ENCODE measurements at regions of chr1 and their contacts with region 1.

Region 1: DNA sequence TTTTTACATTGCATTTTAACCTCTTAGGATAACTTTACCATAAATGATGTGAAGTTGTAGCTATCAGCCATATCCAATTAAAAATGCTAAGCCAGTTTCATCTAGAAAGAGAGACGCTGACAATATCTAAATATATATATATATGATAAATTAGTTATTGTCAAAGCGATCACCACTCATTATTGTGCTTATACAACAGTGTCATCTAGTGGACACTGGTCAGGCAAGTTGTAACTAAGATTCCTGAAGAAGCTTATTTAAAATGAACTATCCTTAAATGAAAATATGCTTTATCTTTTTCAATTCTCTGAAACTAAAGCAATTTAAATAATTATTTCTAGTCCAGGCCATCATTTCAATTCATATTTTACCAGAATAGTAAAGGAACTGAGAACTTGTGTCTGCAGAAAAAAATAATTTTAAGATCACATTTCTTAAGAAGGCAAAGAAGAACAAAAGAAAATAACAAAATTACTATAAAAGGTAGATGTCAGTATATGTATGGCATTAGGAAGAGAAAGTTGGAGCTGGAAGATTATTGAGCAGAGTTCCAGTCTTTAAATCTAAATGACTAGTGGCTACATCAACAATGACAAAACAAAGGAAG is 193.3 kb upstream of the SNX7 start:
- DNase-seq: peak; percentile 89
- ATAC-seq: peak; percentile 81
- H3K4me3 ChIP-seq: no peak overlapping the region
- H3K27ac ChIP-seq: peak overlapping the region; percentile 7; the same call in 1 of the 2 replicates
- H3K4me1 ChIP-seq: peaks cover 16% of the 10 kb centered on the region
- H3K27me3 ChIP-seq: no peaks in the 10 kb centered on the region
- CTCF ChIP-seq: peak; percentile 75

Region 2: GRCh38 chr1:97668945-97669344 is 799.3 kb before region 1 on chr1:
- CTCF ChIA-PET with region 1: no interaction called
- POLR2A ChIA-PET with region 1: no interaction called
- intact Hi-C with region 1: loop called (anchors 1 kb)
- DNase-seq: peak; percentile 64
- ATAC-seq: peak; percentile 91
- H3K4me3 ChIP-seq: no peak overlapping the region
- H3K27ac ChIP-seq: no peak overlapping the region
- H3K4me1 ChIP-seq: peaks cover 7% of the 10 kb centered on the region; the same call in 1 of the 2 replicates
- H3K27me3 ChIP-seq: no peaks in the 10 kb centered on the region
- CTCF ChIP-seq: peak; percentile 76

Region 3: DNA sequence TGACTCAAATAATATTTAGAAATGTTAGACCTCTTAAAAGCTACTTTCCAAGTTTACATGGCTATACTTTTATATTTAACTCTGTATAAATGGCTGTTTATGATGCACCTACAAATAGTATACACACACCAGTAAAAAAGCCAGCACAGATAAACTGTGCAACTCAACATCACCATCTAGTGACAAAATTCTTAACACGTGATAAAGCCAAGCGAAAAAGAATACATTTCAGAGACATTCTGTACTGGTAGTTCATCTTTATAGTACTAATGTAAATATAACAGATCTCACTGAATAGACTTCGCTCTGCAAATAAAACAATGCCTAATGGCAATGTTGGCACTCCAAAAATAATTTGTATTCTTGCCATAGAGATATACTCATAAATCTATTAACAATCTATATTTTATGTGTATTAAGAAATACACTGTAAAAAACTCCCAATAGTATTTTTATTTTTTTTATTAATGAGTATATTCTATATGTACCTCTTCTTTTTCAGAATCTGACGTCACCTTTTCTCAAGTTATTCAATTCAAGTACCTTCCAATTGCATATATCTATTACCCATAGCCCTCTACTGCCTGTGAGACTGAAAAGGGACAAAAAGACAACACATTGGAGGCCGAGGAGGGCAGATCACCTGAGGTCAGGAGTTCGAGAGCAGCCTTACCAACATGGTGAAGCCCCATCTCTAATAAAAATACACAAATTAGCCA is 647.6 kb before region 1 on chr1:
- CTCF ChIA-PET with region 1: no interaction called
- POLR2A ChIA-PET with region 1: no interaction called
- intact Hi-C with region 1: loop called (anchors 5 kb)
- DNase-seq: peak; percentile 76
- ATAC-seq: peak; percentile 72
- H3K4me3 ChIP-seq: no peak overlapping the region
- H3K27ac ChIP-seq: no peak overlapping the region
- H3K4me1 ChIP-seq: no peaks in the 10 kb centered on the region
- H3K27me3 ChIP-seq: no peaks in the 10 kb centered on the region
- CTCF ChIP-seq: peak; percentile 82

Region 4: GRCh38 chr1:98086796-98087441 is 381.3 kb before region 1 on chr1:
- CTCF ChIA-PET with region 1: no interaction called
- POLR2A ChIA-PET with region 1: no interaction called
- intact Hi-C with region 1: loop called (anchors 10 kb)
- DNase-seq: peak; percentile 97
- ATAC-seq: peak; percentile 83
- H3K4me3 ChIP-seq: no peak overlapping the region
- H3K27ac ChIP-seq: peak overlapping the region; percentile 74
- H3K4me1 ChIP-seq: peaks cover 66% of the 10 kb centered on the region
- H3K27me3 ChIP-seq: no peaks in the 10 kb centered on the region
- CTCF ChIP-seq: no peak

Measured in PC-3 (cell line).